Posterior vena cava (tissue), 2 donors: ENCODE measurements at regions of chrX and their contacts with region 1.

Region 1: GRCh38 chrX:104445446-104446019 is 120.5 kb upstream of the IL1RAPL2 start:
- DNase-seq: no peak

Region 2: DNA sequence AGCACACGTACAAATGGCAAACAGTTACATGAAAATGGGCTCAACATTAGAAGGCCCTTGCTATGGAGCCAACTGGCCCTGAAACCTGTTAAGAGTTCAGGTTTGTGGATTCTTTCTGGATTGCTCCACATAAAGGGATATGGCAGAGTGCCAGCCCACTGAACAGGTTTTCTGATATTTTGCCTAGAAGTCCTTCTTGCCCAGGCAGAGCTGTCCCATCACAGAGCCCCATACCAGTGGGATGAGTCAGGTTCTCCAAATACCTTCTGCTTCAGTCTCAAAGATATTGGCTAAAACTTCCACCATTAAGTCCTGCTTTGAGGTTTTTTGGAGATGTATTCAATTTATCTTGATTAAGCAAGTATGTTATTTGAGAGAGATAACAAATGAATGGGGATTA is 26.3 kb before region 1 on chrX:
- intact Hi-C with region 1: no loop called
- DNase-seq: no peak

Region 3: DNA sequence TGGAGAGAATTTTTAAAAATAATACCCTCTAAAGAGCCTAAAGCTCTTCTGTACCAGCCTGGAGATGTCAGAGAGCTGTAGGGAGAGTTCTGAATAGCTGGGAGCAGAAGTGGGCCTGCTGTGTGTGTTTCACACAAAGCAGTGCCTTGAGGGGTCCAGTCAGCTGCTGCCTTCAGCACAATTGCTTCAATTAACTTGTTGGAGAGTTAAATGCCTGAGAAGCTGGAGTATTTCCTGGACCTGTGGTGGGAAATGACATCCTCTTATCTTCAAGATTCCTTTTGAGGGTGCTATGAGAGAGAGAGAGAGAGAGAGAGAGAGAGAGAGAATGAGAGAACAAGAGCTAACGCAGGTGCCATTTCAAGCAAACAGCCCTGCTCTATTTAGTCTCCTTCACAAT is 24.2 kb after region 1 on chrX:
- intact Hi-C with region 1: loop called in 1 of 2 experiments (anchors 1 kb)
- DNase-seq: no peak